ENCODE measurements at regions of chr11 and their contacts with region 1.

Region 1: GRCh38 chr11:70739811-70740490 is 341.6 kb downstream of the CTTN start:
- DNase-seq: no peak
- ATAC-seq: no peak

Region 2: GRCh38 chr11:70577948-70578347 is 162.0 kb before region 1 on chr11:
- intact Hi-C with region 1: loop called (anchors 10 kb)
- DNase-seq: no peak
- ATAC-seq: no peak

Region 3: GRCh38 chr11:70669871-70670675 is 69.9 kb before region 1 on chr11:
- intact Hi-C with region 1: no loop called
- DNase-seq: peak; percentile 42
- ATAC-seq: no peak

Region 4: DNA sequence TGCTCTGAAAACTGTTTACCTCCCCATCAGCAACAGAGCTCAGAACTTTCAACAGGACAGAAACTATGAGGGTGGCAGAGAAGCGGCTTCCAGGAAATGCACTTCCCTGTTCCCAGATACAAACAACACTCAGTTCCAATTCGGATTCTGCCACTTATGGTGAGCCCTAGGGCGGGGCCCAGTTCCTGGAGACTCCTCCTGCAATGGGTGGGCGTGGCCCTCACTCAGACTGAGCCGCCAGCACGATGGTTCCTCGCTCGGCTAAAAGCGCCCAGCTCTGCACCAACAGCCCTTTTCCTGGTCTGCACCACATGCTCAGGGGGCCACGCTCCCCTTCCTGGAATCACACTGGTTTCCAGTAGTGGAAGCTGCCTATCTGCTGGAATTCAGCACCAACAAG is 27.5 kb before region 1 on chr11:
- intact Hi-C with region 1: no loop called
- DNase-seq: peak; percentile 62
- ATAC-seq: no peak

Region 5: GRCh38 chr11:70763606-70764005 is 23.7 kb after region 1 on chr11:
- intact Hi-C with region 1: no loop called
- DNase-seq: no peak
- ATAC-seq: no peak

Region 6: GRCh38 chr11:70861559-70861958 is 121.6 kb after region 1 on chr11:
- intact Hi-C with region 1: no loop called
- DNase-seq: no peak
- ATAC-seq: no peak

Measured in Right ventricle myocardium inferior (tissue), 1 donor.